K562 (cell line): ENCODE measurements at regions of chr3 and their contacts with region 1.

Region 1: GRCh38 chr3:99842826-99843589 is 25.3 kb downstream of the CMSS1 start:
- DNase-seq: peak in 2 of 4 experiments; percentile 16 to 20
- ATAC-seq: peak; percentile 78
- H3K4me3 ChIP-seq: no peak overlapping the region
- H3K27ac ChIP-seq: no peak overlapping the region
- H3K4me1 ChIP-seq: peaks cover 0 to 7% of the 10 kb centered on the region in 2 experiments; a peak in 1 of 5 replicates
- H3K27me3 ChIP-seq: no peaks in the 10 kb centered on the region
- CTCF ChIP-seq: peak; percentile 24 to 70 (median 44); a peak in 3 of 6 replicates
- EP300 ChIP-seq: no peak
- POLR2A ChIP-seq: no peak
- RAD21 ChIP-seq: peak; percentile 75

Region 2: DNA sequence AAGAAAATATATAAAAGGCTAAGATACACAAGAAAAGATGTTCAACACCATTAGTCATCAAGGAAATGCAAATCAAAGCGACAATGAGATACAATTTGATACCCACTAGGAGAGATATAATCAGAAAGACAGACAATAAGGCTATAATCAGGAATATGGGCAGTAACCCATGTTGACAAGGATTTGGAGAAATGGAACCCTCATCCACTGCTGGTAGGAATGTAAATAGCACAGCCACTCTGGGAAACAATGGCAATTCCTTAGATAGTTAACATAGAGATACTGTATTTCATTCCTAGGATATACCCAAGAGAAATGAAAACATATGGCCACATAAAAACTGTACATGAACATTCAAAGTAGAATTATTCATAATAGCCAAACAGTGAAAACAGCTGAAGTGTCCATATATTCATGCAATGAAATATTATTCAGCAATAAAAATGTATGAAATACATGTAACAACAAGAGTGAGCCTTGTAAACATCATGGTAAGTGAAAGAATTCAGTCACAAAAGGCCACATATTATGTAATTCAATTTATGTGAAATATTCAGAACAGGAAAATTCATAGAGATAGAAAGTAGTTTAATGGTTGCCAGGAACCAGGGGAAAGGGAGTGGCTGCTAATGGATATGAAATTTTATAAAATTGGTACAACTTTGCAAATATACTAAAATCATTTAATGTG is 222.8 kb before region 1 on chr3:
- CTCF ChIA-PET with region 1: no interaction called
- POLR2A ChIA-PET with region 1: no interaction called
- in situ Hi-C with region 1: no loop called
- intact Hi-C with region 1: no loop called
- DNase-seq: no peak
- ATAC-seq: no peak
- H3K4me3 ChIP-seq: no peak overlapping the region
- H3K27ac ChIP-seq: no peak overlapping the region
- H3K4me1 ChIP-seq: no peaks in the 10 kb centered on the region
- H3K27me3 ChIP-seq: no peaks in the 10 kb centered on the region
- CTCF ChIP-seq: no peak
- EP300 ChIP-seq: no peak
- POLR2A ChIP-seq: no peak
- RAD21 ChIP-seq: no peak

Region 3: DNA sequence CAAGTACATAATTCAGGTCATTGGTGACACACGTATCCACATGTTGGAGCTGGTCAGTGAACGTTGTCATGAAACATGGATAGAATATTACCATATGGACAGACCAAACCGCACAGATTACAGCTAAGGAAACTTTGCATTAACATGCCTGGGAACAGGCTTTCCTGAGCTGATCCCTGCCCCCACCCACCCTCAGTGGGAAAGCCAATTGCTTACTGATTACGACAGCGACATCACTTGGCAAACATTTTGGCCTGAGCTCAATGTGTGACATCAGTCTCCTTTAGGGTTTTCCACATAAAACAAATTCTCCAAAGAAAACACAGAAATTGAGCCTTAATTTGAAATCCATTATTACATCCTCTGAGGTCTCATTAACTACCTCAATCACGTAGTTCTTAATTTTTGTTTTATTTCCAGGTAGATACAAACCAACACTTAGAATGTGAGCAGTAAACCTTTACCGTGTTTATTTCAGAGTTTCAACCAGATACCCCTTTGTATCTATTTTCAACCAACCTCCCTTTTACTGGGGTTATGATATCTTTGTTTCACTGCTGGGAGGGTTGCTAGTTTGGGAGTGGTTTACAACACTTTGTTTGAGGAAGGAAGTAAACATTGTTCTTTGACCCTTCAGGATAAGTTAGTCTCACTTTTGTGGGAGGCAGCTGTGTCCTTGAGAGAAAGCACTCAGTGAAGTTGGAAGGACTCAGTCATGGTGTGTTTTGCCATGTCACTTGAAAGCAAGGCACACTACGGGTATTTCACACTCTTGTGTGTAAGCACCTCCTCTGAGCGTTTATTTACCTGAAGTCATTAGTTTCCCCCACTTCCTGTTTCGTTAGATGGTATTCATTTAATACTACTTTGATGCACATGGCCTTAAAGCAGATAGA is 77.7 kb after region 1 on chr3:
- CTCF ChIA-PET with region 1: no interaction called
- POLR2A ChIA-PET with region 1: no interaction called
- in situ Hi-C with region 1: no loop called
- intact Hi-C with region 1: loop called (anchors 5 kb)
- DNase-seq: peak in 3 of 4 experiments; percentile 15 to 64 (median 34)
- ATAC-seq: peak; percentile 86
- H3K4me3 ChIP-seq: no peak overlapping the region
- H3K27ac ChIP-seq: peak overlapping the region; percentile 90
- H3K4me1 ChIP-seq: peaks cover 0 to 19% of the 10 kb centered on the region in 2 experiments; a peak in 4 of 5 replicates
- H3K27me3 ChIP-seq: no peaks in the 10 kb centered on the region
- CTCF ChIP-seq: no peak; a peak in 1 of 6 replicates
- EP300 ChIP-seq: no peak
- POLR2A ChIP-seq: no peak
- RAD21 ChIP-seq: no peak

Region 4: GRCh38 chr3:100002599-100003350 is 159.8 kb after region 1 on chr3:
- CTCF ChIA-PET with region 1: no interaction called
- POLR2A ChIA-PET with region 1: no interaction called
- in situ Hi-C with region 1: no loop called
- intact Hi-C with region 1: loop called (anchors 10 kb)
- DNase-seq: peak in 2 of 4 experiments; percentile 13 to 40
- ATAC-seq: peak; percentile 87
- H3K4me3 ChIP-seq: no peak overlapping the region
- H3K27ac ChIP-seq: no peak overlapping the region
- H3K4me1 ChIP-seq: peaks cover 0 to 7% of the 10 kb centered on the region in 2 experiments; a peak in 2 of 5 replicates
- H3K27me3 ChIP-seq: no peaks in the 10 kb centered on the region
- CTCF ChIP-seq: no peak
- EP300 ChIP-seq: no peak
- POLR2A ChIP-seq: no peak
- RAD21 ChIP-seq: no peak

Region 5: GRCh38 chr3:100068826-100069225 is 225.8 kb after region 1 on chr3:
- CTCF ChIA-PET with region 1: no interaction called
- POLR2A ChIA-PET with region 1: no interaction called
- in situ Hi-C with region 1: loop called (anchors 25 kb)
- intact Hi-C with region 1: no loop called
- DNase-seq: peak; percentile 32 to 79 (median 52)
- ATAC-seq: peak; percentile 96
- H3K4me3 ChIP-seq: no peak overlapping the region
- H3K27ac ChIP-seq: no peak overlapping the region
- H3K4me1 ChIP-seq: peaks cover 2 to 8% of the 10 kb centered on the region in 2 experiments; a peak in 3 of 5 replicates
- H3K27me3 ChIP-seq: no peaks in the 10 kb centered on the region
- CTCF ChIP-seq: peak; percentile 69 to 78 (median 70)
- EP300 ChIP-seq: no peak
- POLR2A ChIP-seq: no peak
- RAD21 ChIP-seq: peak; percentile 75 to 84

Region 6: DNA sequence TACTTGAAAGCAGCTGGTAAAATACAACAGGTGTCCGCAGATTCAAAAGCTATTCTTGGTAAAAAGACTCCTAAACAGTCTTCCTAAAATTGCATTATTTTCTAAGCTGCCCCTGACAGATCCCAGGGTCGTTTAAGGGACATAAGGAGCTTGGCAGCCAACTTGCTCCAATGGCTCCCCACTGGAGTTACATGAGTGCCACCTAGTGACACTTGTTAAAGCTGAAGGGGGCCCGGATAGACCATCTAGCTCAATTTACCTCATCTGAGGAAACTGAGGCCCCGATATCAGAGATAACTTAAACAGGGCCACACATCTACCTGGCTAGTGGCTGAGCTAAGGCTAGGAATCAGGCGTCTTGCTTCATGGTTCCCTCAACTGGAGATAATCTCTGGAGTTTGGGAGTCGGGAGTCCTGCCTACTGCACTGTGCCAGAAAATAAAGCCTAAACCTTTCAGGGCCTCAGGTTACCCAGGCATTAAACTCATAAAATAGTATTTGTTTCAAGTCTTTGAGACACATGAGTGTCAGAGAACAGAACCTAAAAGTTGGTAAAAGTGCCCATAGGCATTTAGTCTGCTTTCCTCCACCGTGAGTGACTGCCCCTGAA is 411.3 kb after region 1 on chr3:
- CTCF ChIA-PET with region 1: interaction called, 17 read pairs
- POLR2A ChIA-PET with region 1: no interaction called
- in situ Hi-C with region 1: no loop called
- intact Hi-C with region 1: loop called (anchors 1 kb)
- DNase-seq: peak; percentile 14 to 71 (median 42)
- ATAC-seq: peak; percentile 94
- H3K4me3 ChIP-seq: no peak overlapping the region
- H3K27ac ChIP-seq: no peak overlapping the region
- H3K4me1 ChIP-seq: peaks cover 0 to 6% of the 10 kb centered on the region in 2 experiments; a peak in 3 of 5 replicates
- H3K27me3 ChIP-seq: no peaks in the 10 kb centered on the region
- CTCF ChIP-seq: peak; percentile 66 to 79 (median 78)
- EP300 ChIP-seq: no peak
- POLR2A ChIP-seq: no peak
- RAD21 ChIP-seq: peak; percentile 89 to 93

Region 7: DNA sequence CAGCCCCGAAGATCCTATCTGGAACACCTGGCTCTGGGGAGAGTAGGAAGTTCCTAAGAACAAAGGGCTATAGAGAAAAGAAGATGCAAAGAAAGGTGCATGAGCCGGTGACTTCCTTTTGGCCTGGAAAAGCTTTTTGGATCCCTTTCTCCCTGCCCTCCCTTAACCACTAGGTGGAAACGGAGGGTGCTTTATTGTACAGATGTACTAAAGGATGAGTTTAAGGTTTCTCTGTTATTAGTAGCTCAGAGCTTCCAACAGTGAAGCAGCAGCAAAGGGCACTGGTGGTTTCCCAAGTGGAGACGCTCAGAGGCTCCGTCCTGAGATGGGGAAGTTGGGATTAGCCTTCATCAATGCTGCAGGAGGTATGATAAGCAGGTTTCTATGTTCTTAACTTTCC is 760.5 kb after region 1 on chr3:
- CTCF ChIA-PET with region 1: no interaction called
- POLR2A ChIA-PET with region 1: no interaction called
- in situ Hi-C with region 1: loop called (anchors 25 kb)
- intact Hi-C with region 1: no loop called
- DNase-seq: peak in 2 of 4 experiments; percentile 15 to 41
- ATAC-seq: peak; percentile 86
- H3K4me3 ChIP-seq: no peak overlapping the region
- H3K27ac ChIP-seq: no peak overlapping the region
- H3K4me1 ChIP-seq: peaks cover 0 to 8% of the 10 kb centered on the region in 2 experiments; a peak in 3 of 5 replicates
- H3K27me3 ChIP-seq: no peaks in the 10 kb centered on the region
- CTCF ChIP-seq: peak; percentile 36 to 49 (median 38); a peak in 4 of 6 replicates
- EP300 ChIP-seq: no peak
- POLR2A ChIP-seq: no peak
- RAD21 ChIP-seq: peak in 1 of 2 experiments; percentile 57; a peak in 2 of 4 replicates